Common myeloid progenitor, CD34-positive (primary cell): ENCODE measurements at regions of chr5 and their contacts with region 1.

Region 1: GRCh38 chr5:172932313-172933017 is 26.8 kb upstream of the RPL26L1 start:
- DNase-seq: peak; percentile 47 to 75 (median 75)
- H3K4me3 ChIP-seq: no peak overlapping the region
- H3K27ac ChIP-seq: no peak overlapping the region
- H3K4me1 ChIP-seq: peaks cover 0 to 7% (median 0%) of the 10 kb centered on the region in 4 experiments
- H3K27me3 ChIP-seq: no peaks in the 10 kb centered on the region

Region 2: GRCh38 chr5:172714491-172715421 is 217.7 kb before region 1 on chr5:
- CTCF ChIA-PET with region 1: interaction called, 571 read pairs
- POLR2A ChIA-PET with region 1: interaction called, 4 read pairs
- DNase-seq: peak; percentile 64 to 75 (median 66)
- H3K4me3 ChIP-seq: no peak overlapping the region
- H3K27ac ChIP-seq: no peak overlapping the region
- H3K4me1 ChIP-seq: peaks cover 0 to 15% (median 5%) of the 10 kb centered on the region in 4 experiments
- H3K27me3 ChIP-seq: no peaks in the 10 kb centered on the region

Region 3: GRCh38 chr5:172721301-172722130 is 210.9 kb before region 1 on chr5:
- CTCF ChIA-PET with region 1: interaction called, 571 read pairs
- POLR2A ChIA-PET with region 1: interaction called, 3 read pairs
- DNase-seq: no peak
- H3K4me3 ChIP-seq: no peak overlapping the region
- H3K27ac ChIP-seq: no peak overlapping the region
- H3K4me1 ChIP-seq: peaks cover 0 to 13% (median 1%) of the 10 kb centered on the region in 4 experiments
- H3K27me3 ChIP-seq: peaks cover 0 to 1% (median 0%) of the 10 kb centered on the region in 5 experiments

Region 4: DNA sequence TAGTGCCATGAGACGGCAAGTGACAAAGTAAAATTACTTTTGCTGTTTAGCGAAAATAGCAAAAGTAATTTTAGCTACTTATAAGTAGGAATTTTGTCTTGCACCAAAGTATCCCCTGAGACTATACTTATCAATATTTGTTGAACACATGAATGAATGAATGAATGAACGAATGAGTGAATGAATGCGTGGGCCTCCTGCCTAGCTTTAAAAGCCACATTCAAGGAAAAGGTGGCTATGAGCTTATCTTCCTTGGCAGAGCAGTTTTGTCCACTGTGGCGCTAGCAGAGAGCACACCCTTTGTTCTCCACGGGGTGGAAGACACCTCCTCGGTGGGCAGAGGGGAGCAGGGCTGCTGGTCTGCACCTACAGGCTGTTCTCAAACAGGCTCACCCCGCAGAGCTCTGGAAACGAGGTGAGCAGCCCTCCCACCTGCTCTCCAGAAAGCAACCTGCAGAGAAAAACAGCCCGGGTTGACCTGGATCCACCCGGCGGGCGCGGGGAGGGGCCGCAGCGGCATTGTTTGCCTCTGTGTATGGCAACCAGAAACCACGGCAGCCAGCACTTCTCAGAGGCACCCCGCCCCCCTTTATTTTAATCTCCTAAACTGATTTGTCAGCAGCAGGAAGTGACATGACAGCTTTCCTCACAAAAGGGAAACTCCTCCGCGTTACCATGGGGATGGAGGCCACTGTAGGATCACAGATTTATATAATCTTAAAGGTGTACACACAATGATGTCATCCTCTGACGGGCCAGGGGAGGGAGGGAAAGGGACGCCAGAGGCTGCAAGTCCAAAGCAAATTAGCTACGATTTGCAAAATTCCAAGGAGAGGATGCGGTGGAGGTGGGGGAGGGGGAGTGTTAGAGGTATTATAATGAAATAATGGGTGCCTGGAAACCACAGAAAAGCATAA is 167.4 kb before region 1 on chr5:
- CTCF ChIA-PET with region 1: interaction called, 14 read pairs
- POLR2A ChIA-PET with region 1: no interaction called
- DNase-seq: peak; percentile 100
- H3K4me3 ChIP-seq: peak overlapping the region in 6 of 7 experiments; percentile 27 to 94 (median 68)
- H3K27ac ChIP-seq: peak overlapping the region; percentile 93 to 97
- H3K4me1 ChIP-seq: peaks cover 12 to 59% (median 40%) of the 10 kb centered on the region in 4 experiments
- H3K27me3 ChIP-seq: no peaks in the 10 kb centered on the region

Region 5: GRCh38 chr5:172897481-172898217 is 34.8 kb before region 1 on chr5:
- CTCF ChIA-PET with region 1: interaction called, 25 read pairs
- POLR2A ChIA-PET with region 1: no interaction called
- DNase-seq: peak in 2 of 3 donors; percentile 72 to 83
- H3K4me3 ChIP-seq: peak overlapping the region in 2 of 7 experiments; percentile 16 to 63
- H3K27ac ChIP-seq: peak overlapping the region; percentile 33 to 60
- H3K4me1 ChIP-seq: peaks cover 0 to 37% (median 16%) of the 10 kb centered on the region in 4 experiments
- H3K27me3 ChIP-seq: no peaks in the 10 kb centered on the region

Region 6: GRCh38 chr5:172920447-172920849 is 12.0 kb before region 1 on chr5:
- CTCF ChIA-PET with region 1: interaction called, 19 read pairs
- POLR2A ChIA-PET with region 1: no interaction called
- DNase-seq: peak in 2 of 3 donors; percentile 30 to 56
- H3K4me3 ChIP-seq: no peak overlapping the region
- H3K27ac ChIP-seq: no peak overlapping the region
- H3K4me1 ChIP-seq: peaks cover 0 to 17% (median 7%) of the 10 kb centered on the region in 4 experiments
- H3K27me3 ChIP-seq: no peaks in the 10 kb centered on the region

Region 7: GRCh38 chr5:172943283-172943841 is 10.9 kb after region 1 on chr5:
- CTCF ChIA-PET with region 1: interaction called, 31 read pairs
- POLR2A ChIA-PET with region 1: interaction called, 3 read pairs
- DNase-seq: peak; percentile 38 to 88 (median 72)
- H3K4me3 ChIP-seq: no peak overlapping the region
- H3K27ac ChIP-seq: peak overlapping the region in 1 of 2 experiments; percentile 44
- H3K4me1 ChIP-seq: peaks cover 0 to 17% (median 12%) of the 10 kb centered on the region in 4 experiments
- H3K27me3 ChIP-seq: no peaks in the 10 kb centered on the region

Region 8: DNA sequence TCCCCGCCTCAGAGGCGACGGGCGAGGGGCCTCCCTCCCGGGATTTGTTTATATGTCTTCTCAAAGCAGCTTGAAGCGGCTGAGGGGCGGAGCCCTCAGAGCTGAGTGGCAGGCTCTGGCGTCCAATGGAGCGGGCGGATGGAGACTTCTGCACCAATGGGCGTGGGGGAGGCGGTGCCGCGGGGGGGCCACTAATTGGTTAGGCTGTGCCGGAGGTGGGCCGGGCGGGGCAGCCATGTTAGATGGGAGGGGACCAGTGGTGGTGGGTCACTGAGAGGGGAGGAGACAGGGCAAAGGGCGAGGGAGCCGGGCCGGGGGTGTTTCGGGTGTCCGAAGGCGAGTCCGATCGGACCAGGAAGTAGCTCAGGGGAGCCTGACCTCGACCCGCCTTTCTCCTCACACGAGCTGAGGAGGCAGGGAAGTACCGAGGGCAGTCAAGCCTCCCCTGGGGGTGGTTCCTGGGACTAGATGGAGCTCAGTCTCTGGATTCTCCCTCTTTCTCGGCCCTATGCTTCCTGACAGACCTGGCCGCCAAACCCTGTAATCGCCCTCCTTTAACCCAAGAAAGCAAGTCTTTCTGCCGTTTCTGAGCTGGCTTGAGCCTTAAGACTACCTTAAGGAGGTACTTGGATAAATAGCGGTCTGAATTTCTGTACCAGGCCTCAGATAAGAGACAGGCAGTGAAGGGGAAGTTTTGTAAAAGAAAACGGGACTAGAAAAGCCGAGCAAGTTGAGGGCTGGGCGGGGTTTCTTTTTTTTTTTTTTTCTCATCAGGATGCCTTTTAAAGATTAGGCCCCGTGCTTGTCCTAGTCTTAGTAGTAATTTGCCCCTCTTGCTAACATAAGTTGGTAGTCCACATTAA is 124.8 kb after region 1 on chr5:
- CTCF ChIA-PET with region 1: no interaction called
- POLR2A ChIA-PET with region 1: no interaction called
- DNase-seq: peak; percentile 99
- H3K4me3 ChIP-seq: peak overlapping the region; percentile 87 to 99 (median 92)
- H3K27ac ChIP-seq: peak overlapping the region; percentile 88 to 94
- H3K4me1 ChIP-seq: peaks cover 10 to 27% (median 19%) of the 10 kb centered on the region in 4 experiments
- H3K27me3 ChIP-seq: no peaks in the 10 kb centered on the region